ENCODE measurements at regions of chr5 and their contacts with region 1.

Region 1: DNA sequence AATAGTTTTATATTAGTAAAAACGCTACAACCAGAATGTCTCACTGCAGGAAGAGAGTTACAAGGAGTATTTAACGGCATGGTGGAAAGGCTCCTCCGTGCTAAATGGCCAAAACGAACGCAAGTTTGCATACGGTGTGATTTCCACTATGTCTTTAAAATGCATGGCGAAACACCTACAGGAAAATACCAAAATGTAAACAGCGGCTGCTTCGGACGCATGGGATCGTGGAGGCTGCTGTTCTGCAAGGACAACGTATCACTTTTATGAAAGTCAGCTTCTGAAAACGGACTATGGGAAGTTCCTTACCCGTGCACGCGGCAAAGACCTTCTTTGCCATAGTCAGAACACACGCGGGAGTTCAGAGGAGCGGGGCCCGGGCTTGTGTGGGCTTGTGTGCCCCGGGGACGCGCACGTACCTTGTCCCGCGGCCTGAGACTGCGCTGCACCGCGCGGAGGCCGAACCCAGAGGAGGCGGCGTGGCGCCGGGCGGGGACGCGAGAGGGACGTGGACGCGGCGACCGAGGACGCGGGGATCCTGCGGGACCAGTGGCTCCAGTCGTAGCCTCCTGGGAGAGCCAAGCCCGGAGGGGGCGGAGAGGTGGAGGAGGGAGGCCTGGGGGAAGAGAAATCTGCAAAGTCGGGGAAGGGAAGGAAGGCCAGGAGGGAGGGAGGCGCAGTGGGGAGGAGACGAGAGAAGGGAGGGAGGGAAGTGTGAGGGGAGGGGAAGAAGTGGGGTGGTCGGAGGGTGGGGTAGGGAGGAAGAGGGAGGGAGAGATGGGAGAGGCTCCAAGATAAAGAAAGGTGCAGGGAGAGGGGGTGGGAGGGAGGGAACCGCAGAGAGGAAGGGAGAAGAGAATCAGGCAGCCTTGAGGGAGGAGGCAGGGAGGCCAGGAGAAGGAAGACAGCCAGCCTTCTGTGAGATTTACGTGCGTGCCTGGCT is at the start of gene CMBL:
- DNase-seq: peak; percentile 85
- H3K4me3 Mint-ChIP-seq: peak within 1 kb of the TSS; percentile 85
- H3K27ac Mint-ChIP-seq: peak within 1 kb of the TSS; percentile 86
- H3K4me1 Mint-ChIP-seq: peaks cover 52% of the 10 kb centered on the region
- H3K27me3 Mint-ChIP-seq: no peaks in the 10 kb centered on the region
- CTCF ChIP-seq: no peak
- total RNA-seq, gene CMBL: 17.6 and 24.9 TPM in 2 replicates

Region 2: DNA sequence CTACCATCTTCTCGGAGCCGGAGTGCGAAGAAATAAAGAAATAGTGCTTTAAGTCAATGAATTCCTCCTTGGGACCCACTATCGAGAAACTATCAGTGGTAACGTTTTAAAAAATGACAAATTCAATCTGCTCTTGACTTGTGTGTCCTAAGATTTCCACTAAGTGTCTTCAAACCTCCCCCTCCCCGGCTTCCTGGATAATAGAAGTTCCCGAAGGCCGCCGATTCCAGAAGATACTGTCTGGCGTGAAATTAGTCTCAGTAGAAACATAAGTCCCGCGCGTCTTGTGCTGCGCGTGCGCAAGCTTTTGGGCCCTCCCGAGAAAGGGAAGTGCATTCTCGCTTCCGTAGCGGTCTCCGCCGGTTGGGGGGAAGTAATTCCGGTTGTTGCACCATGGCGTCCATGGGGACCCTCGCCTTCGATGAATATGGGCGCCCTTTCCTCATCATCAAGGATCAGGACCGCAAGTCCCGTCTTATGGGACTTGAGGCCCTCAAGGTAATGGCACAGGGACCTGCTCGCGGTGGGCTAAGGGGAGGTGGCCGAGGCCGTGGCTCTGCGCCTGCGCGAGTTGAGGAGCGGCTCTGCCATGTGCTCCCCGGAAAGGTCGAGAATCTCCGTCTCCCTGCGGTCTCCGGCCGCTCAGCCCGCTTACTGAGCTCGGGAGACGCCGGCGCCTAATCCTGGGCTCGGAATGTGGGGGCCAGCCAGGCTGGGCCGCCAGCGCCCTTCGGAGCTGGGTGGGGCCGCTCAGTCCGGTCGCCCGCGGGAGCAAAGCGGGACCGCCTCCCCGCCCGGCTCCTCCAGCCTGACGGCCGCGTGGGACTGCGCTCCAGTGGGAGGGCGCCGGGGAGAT is 57.3 kb before region 1 on chr5 and contains the start of gene CCT5:
- CTCF ChIA-PET with region 1: no interaction called
- POLR2A ChIA-PET with region 1: interaction called, 41 read pairs
- intact Hi-C with region 1: no loop called
- DNase-seq: peak; percentile 98
- H3K4me3 Mint-ChIP-seq: peak within 1 kb of the TSS; percentile 84
- H3K27ac Mint-ChIP-seq: peak within 1 kb of the TSS; percentile 100
- H3K4me1 Mint-ChIP-seq: peaks cover 24% of the 10 kb centered on the region
- H3K27me3 Mint-ChIP-seq: no peaks in the 10 kb centered on the region
- CTCF ChIP-seq: no peak
- total RNA-seq, gene CCT5: 220 and 322 TPM in 2 replicates

Region 3: GRCh38 chr5:10358999-10359398 is 51.5 kb after region 1 on chr5:
- CTCF ChIA-PET with region 1: interaction called, 8 read pairs
- POLR2A ChIA-PET with region 1: interaction called, 226 read pairs
- intact Hi-C with region 1: no loop called
- DNase-seq: no peak
- H3K4me3 Mint-ChIP-seq: no peak overlapping the region
- H3K27ac Mint-ChIP-seq: no peak overlapping the region
- H3K4me1 Mint-ChIP-seq: peaks cover 26% of the 10 kb centered on the region
- H3K27me3 Mint-ChIP-seq: no peaks in the 10 kb centered on the region
- CTCF ChIP-seq: no peak

Region 4: DNA sequence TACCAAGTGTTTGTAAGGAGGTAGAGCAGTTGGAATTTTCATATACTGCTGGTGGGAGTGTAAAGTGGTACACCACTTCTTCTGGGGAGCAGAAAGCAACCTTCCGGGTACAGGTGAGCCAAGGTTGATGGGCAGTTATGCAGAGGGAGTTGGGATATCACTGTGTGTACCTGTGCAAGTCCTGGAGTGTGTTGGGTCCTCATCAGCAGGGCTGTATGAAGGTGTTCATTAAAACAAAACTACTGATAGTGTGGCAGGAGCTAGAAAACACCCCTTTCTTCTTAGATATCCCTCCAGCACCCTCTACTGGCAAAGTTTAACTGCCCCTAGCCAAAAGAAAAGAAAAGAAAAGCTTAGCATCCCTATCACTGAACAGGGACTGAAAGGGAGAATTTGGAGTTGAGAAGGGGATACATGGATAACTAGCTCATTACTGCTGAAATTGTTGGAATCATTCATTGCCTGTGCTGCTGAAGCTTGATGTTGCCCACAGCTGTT is 56.8 kb after region 1 on chr5:
- CTCF ChIA-PET with region 1: interaction called, 4 read pairs
- POLR2A ChIA-PET with region 1: interaction called, 42 read pairs
- intact Hi-C with region 1: no loop called
- DNase-seq: peak; percentile 43
- H3K4me3 Mint-ChIP-seq: no peak overlapping the region
- H3K27ac Mint-ChIP-seq: no peak overlapping the region
- H3K4me1 Mint-ChIP-seq: peaks cover 37% of the 10 kb centered on the region
- H3K27me3 Mint-ChIP-seq: no peaks in the 10 kb centered on the region
- CTCF ChIP-seq: peak; percentile 9